Prostate gland (tissue), 2 donors: ENCODE measurements at regions of chr17 and their contacts with region 1.

Region 1: GRCh38 chr17:76714822-76715495 is 4.2 kb upstream of the MXRA7 start:
- DNase-seq: peak; percentile 44
- H3K4me3 ChIP-seq: no peak overlapping the region
- H3K27ac ChIP-seq: no peak overlapping the region
- H3K4me1 ChIP-seq: peaks cover 5% of the 10 kb centered on the region
- H3K27me3 ChIP-seq: no peaks in the 10 kb centered on the region
- CTCF ChIP-seq: peak; percentile 73 to 84 (median 76)
- POLR2A ChIP-seq: no peak

Region 2: DNA sequence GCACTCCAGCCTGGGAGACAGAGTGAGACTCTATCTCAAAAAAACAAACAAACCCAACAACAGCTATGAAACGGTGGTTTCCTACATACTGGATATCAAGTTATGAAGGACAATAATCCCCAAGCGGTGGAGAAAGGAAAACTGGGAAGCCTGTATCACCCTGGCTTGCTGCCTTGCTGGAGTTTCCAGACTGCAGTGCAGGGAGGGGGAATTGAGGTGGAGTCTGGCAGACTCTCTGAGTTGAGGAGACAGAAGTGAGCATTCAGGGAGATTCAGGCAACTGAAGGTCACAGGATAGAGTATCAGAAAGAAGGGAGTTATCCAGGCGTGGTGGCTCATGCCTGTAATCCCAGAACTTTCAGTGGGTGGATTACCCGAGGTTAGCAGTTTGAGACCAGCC is 418.8 kb before region 1 on chr17:
- intact Hi-C with region 1: no loop called
- DNase-seq: no peak
- H3K4me3 ChIP-seq: no peak overlapping the region
- H3K27ac ChIP-seq: no peak overlapping the region
- H3K4me1 ChIP-seq: no peaks in the 10 kb centered on the region
- H3K27me3 ChIP-seq: no peaks in the 10 kb centered on the region
- CTCF ChIP-seq: no peak
- POLR2A ChIP-seq: no peak

Region 3: DNA sequence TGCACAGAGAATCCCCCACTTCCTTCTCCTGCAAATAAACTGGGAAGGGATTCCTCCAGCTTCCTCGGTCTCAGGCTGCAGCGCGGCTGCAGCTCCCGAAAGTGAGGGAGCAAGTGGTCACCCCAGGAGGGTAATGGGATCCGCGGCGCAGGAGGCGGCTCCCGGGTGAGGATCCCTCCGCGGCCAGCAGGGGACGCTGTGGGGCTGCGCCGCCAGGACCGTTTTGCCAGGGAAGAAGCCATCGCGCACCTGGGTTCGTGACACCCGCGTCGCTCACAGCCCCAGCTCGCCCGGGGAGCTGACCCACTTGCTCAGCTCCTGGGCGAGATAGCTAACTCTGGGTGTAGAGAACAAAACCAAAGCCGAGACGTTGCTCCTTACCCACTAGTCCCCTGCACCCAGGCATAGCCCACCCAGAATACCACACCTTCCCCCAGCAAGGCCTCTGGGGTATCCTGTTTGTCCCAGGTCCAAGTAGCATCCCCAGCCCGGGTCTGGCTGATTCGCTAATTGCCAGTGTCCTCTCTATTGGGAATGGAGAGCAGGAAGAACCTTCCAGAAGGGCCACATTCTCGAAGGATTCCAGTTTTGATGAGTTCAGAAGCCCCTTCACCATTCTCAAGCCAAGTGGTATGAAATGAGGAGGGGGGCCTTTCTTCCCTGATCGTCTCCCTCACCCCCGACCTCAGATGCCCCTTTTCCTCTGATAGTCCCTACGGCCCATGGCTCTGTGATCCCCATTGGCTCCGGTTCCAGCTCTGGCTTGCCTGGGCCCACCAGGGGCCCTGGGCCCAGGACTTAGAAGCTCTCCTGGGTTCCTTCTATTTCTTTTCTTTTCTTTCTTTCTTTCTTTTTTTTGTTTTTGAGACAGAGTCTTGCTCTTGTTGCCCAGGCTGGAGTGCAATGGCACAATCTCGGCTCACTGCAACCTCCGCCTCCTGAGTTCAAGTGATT is 191.6 kb before region 1 on chr17:
- intact Hi-C with region 1: loop called (anchors 5 kb)
- DNase-seq: no peak
- H3K4me3 ChIP-seq: no peak overlapping the region
- H3K27ac ChIP-seq: no peak overlapping the region
- H3K4me1 ChIP-seq: peaks cover 7% of the 10 kb centered on the region
- H3K27me3 ChIP-seq: no peaks in the 10 kb centered on the region
- CTCF ChIP-seq: peak; percentile 99
- POLR2A ChIP-seq: no peak

Region 4: DNA sequence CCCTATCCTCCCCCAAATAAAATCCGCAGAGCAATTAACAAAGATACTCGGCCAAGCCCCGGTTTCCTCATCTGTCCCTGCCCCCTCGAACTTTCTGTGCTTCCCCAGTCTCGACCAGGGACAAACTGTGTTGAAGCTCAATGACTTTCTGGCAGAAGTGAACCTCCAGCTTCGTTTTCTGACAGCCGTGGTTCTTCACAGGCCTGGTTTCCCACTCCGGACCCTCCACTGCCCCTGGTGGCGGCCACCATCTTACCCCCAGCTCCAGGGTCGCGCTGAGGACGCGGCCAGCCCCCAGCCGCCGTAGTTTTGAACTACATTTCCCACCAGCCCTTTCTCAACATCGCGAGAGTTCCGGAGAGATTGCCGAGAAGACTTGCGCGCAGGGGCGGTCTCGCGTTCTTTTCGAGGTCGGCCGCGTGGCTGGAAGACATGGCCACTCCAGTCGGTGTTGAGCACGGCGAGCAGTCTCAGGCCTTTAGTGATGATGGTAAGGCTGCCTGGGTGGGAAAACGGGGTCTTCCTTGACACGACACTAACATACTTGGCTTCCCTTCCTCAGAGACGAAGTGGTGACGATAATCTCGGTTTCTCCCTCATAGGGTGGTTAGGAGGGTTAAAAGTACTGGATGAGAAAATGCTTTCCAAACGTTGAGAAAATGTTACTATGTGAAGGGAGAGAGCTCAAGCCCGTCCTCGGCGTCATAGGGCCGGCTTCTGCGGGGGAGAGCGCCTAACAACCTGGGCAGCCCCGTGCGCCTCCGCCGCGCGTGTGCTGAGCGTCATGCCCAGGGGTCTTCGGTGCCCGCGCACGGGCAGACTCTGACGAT is 157.4 kb before region 1 on chr17:
- intact Hi-C with region 1: loop called (anchors 5 kb)
- DNase-seq: peak; percentile 95
- H3K4me3 ChIP-seq: peak overlapping the region; percentile 48 to 61
- H3K27ac ChIP-seq: peak overlapping the region; percentile 84
- H3K4me1 ChIP-seq: no peaks in the 10 kb centered on the region
- H3K27me3 ChIP-seq: no peaks in the 10 kb centered on the region
- CTCF ChIP-seq: peak in 2 of 4 experiments; percentile 67 to 71
- POLR2A ChIP-seq: peak; percentile 77

Region 5: GRCh38 chr17:76623271-76624146 is 91.5 kb before region 1 on chr17:
- intact Hi-C with region 1: loop called (anchors 5 kb)
- DNase-seq: peak; percentile 62
- H3K4me3 ChIP-seq: no peak overlapping the region
- H3K27ac ChIP-seq: no peak overlapping the region
- H3K4me1 ChIP-seq: no peaks in the 10 kb centered on the region
- H3K27me3 ChIP-seq: no peaks in the 10 kb centered on the region
- CTCF ChIP-seq: peak; percentile 84 to 95 (median 91)
- POLR2A ChIP-seq: no peak

Region 6: DNA sequence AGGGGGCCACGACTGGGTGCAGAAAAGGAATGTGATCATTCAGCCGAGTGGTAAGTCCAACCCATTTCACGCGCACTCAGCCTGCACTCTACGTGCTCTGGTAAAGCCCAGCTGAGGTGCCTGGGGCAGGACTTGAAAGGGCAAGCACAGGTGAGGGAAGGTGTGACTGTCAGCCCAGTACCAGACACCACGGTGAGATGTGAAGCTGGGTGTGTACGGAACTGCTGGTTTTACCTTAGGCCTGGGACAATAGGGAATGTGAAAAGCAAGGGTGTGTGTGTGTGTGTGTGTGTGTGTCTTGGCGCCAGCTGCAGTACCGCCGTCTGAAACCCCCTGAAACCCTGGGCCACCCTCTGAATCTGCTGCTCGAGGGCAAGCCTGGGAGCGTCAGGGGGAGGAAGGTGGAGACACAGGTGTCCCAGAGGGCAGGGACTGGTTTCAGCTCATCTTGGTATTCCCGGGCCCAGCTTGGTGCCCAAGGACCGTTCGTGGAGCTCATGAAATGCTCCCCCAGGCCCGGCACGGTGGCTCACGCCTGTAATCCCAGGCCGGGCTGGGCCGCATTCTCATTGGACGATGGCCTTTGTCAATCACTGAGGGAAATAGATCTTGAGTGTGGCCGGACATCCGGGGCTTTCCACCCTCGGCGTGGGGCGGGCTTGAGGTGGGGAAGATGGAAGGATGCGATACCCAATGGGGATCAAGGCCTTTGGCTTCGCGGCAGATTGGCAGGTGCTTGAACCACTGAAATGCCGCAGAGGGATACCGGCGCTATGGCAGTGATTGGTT is 43.6 kb before region 1 on chr17:
- intact Hi-C with region 1: loop called (anchors 5 kb)
- DNase-seq: peak; percentile 100
- H3K4me3 ChIP-seq: peak overlapping the region; percentile 40 to 41
- H3K27ac ChIP-seq: peak overlapping the region; percentile 76 to 77
- H3K4me1 ChIP-seq: no peaks in the 10 kb centered on the region
- H3K27me3 ChIP-seq: no peaks in the 10 kb centered on the region
- CTCF ChIP-seq: no peak
- POLR2A ChIP-seq: no peak

Region 7: DNA sequence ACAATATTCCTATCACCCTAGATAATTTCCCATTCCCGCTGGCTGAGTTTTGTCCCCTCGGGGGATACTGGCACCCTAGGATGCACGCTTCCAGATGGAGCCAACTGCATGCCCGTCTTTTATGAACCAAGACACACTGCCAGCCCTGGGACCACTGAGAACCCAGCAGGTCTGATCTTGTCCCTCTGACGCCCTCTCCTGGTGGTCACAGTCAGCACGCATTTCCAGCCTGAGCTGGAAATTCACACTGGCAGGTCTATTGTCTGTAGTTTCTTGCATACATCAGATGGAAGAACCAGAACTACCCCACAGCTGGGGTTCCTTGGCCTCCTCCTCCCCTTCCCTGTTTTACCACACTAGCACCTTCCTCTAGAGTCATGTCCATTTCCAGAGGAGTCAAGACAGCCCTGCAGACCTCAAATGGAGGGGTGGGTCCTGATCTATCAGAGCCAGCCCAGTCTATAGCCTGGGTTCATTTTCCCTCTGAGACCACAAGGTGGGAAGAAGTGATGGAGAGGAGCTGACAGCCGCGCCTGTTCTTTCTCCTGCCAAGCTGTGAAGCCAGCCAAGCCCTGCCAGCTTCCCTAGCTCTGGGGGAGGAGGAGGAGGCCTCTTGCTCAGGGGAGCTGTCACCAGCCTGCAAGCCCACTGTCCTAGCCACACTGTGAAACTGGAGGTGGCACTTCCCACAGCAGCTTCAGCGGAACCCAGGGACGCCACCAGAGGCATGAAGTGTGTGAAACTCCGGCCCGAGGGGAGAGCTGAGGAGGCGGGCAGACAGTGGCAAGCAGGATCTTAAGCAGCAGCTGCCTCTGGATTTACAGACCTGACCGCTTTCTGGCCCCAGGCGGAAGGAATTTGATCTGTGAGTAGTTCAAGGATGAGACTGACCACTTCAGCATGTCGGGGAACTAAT is 33.5 kb before region 1 on chr17:
- intact Hi-C with region 1: loop called (anchors 5 kb)
- DNase-seq: peak; percentile 65
- H3K4me3 ChIP-seq: no peak overlapping the region
- H3K27ac ChIP-seq: peak overlapping the region; percentile 13 to 37
- H3K4me1 ChIP-seq: no peaks in the 10 kb centered on the region
- H3K27me3 ChIP-seq: no peaks in the 10 kb centered on the region
- CTCF ChIP-seq: peak; percentile 60 to 86 (median 76)
- POLR2A ChIP-seq: no peak